ENCODE measurements at regions of chr10 and their contacts with region 1.

Region 1: DNA sequence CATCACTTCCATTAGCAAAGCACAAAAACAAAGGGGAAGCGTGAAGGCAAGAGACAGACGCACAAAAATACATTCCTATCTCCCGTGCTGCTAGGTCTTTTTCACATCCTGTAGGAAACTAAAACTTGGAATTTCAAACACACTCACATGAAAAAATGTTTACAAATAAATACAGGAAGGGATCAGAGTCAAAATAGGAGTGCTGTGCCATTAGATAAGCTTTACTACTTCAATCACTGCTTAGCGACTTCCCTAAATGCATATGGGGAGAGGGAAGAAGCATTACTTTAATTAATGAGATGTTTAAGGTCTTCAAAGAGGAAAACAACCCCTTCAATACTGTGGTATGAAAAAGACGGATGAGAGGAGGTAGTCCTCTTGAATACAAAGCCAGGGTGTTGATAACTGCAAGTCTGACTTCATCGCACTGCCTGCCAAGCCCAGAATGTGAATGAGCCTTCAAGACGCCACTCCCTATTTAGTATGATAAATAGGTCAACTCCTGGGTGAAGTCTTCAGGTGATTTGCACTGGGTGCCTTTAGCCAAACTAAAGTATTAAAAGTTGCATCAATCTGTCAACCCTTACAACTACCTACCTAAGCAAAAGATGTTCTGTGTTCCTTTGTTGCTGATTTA is 13.9 kb downstream of the PARD3 start:
- DNase-seq: no peak
- H3K4me3 ChIP-seq: no peak overlapping the region
- H3K27ac ChIP-seq: no peak overlapping the region
- H3K4me1 ChIP-seq: no peaks in the 10 kb centered on the region
- H3K27me3 ChIP-seq: no peaks in the 10 kb centered on the region
- CTCF ChIP-seq: no peak
- POLR2A ChIP-seq: no peak

Region 2: GRCh38 chr10:33952692-33953348 is 848.4 kb before region 1 on chr10:
- intact Hi-C with region 1: loop called (anchors 5 kb)
- DNase-seq: no peak
- H3K4me3 ChIP-seq: no peak overlapping the region
- H3K27ac ChIP-seq: no peak overlapping the region
- H3K4me1 ChIP-seq: no peaks in the 10 kb centered on the region
- H3K27me3 ChIP-seq: no peaks in the 10 kb centered on the region
- CTCF ChIP-seq: no peak
- POLR2A ChIP-seq: no peak

Region 3: DNA sequence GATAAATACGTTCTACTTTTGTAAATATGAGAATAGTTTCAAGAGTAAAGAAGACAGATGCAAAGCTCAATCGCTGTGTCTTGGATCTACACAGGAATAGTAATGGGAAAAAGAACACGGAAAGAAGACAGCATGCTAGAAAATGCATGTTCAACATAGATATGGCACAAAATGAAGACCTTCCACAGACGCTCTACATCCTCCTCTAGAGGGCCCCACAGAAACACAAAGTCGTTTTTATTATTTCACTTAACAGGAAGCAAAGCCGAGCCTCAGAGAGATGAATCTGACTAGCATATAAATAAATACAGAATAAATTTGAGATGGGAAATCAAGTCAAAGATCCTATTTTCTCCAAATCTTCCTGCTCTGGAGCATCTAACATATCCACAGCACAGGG is 278.7 kb before region 1 on chr10:
- intact Hi-C with region 1: no loop called
- DNase-seq: no peak
- H3K4me3 ChIP-seq: no peak overlapping the region
- H3K27ac ChIP-seq: no peak overlapping the region
- H3K4me1 ChIP-seq: no peaks in the 10 kb centered on the region
- H3K27me3 ChIP-seq: no peaks in the 10 kb centered on the region
- CTCF ChIP-seq: no peak
- POLR2A ChIP-seq: no peak

Measured in breast epithelium (tissue), 4 donors.